WTC11 (cell line): ENCODE measurements at regions of chr10 and their contacts with region 1.

Region 1: DNA sequence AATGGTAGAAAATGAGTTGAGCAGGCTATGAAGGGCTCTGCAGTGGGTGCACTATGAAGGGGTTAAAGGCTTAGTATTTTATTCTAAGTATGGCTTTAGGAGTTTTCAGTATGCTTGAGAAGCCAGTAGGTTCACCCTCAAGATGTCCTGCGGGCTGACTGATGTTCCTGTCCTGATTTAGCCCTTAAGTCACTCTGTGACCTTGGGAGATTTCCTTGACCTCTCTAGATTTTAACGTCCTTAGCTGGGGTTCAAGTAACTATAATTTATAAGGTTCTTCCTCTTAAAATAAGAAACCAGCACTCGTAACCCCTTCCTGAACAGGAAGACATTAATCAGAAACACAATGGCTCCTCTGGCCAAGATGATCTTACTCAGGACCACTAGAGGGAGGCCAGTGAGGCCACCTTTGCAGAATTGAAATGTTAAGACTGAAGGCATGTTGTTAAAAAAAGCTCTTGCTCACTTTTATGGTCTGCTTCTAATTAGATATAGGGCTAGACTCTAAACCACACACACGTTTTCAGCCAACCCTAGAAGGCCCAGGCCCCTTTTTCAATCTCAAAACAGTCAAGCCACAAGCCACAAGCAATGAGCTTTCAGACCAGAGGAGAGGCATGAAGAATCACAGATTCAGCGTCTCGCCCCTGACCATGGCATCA is 41.9 kb downstream of the CDK1 start:
- DNase-seq: no peak
- ATAC-seq: peak; percentile 71
- H3K4me3 Mint-ChIP-seq: no peak overlapping the region
- H3K27ac Mint-ChIP-seq: no peak overlapping the region; the same call in 1 of the 2 replicates
- H3K4me1 Mint-ChIP-seq: peaks cover 13% of the 10 kb centered on the region
- H3K27me3 Mint-ChIP-seq: no peaks in the 10 kb centered on the region
- CTCF ChIP-seq: no peak

Region 2: DNA sequence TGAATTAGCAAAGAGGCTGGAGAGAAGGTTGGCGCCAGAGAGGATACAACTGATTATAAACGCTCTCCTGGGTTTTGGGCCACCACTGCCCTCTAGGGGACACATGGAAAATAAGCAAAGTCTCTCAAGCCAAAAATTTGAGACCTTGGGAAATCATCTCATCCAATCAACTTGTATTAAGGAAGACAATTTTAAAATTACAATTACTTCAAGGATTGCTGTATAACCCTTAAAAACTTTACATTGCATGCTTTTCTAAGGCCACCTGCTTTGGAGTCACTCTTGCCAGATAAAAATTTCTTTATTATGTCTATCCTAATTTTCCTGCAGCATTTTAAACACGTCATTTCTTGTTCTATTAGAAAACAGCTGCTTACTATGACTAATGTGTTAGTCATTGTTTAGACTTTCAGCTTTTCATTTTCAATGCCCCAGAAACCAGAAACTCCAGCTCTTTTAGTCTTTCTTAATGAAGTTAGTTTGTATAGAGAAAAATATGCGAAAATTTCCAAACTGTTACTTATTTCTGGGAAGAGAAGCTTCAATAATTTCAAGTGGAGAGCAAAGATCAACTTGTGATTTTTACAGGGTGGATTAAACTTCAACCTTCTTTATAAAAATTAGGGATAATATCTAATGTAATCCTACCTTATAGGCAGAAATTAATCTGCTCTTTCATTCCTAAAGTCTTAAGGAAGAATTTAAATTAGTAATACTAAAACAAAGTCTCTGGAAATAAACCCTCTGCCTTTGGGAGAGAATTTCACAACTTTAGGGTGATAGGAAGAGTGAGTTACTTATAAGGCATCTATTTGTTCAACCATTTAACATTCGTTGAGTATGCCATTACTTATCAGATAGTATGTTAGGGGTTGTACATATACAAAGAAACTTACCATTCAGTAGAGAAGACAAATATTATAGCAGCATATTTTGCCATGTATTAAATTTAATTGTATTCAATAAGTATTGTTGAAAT is 144.3 kb after region 1 on chr10:
- CTCF ChIA-PET with region 1: interaction called, 13 read pairs
- POLR2A ChIA-PET with region 1: interaction called, 3 read pairs
- DNase-seq: peak; percentile 58
- ATAC-seq: peak; percentile 88
- H3K4me3 Mint-ChIP-seq: no peak overlapping the region
- H3K27ac Mint-ChIP-seq: no peak overlapping the region
- H3K4me1 Mint-ChIP-seq: peaks cover 26% of the 10 kb centered on the region
- H3K27me3 Mint-ChIP-seq: no peaks in the 10 kb centered on the region
- CTCF ChIP-seq: peak; percentile 61

Region 3: GRCh38 chr10:61189912-61190311 is 369.7 kb after region 1 on chr10:
- CTCF ChIA-PET with region 1: interaction called, 15 read pairs
- POLR2A ChIA-PET with region 1: no interaction called
- DNase-seq: no peak
- ATAC-seq: no peak
- H3K4me3 Mint-ChIP-seq: no peak overlapping the region
- H3K27ac Mint-ChIP-seq: no peak overlapping the region
- H3K4me1 Mint-ChIP-seq: peaks cover 4% of the 10 kb centered on the region
- H3K27me3 Mint-ChIP-seq: no peaks in the 10 kb centered on the region
- CTCF ChIP-seq: no peak